ENCODE measurements at regions of chr10 and their contacts with region 1.

Region 1: DNA sequence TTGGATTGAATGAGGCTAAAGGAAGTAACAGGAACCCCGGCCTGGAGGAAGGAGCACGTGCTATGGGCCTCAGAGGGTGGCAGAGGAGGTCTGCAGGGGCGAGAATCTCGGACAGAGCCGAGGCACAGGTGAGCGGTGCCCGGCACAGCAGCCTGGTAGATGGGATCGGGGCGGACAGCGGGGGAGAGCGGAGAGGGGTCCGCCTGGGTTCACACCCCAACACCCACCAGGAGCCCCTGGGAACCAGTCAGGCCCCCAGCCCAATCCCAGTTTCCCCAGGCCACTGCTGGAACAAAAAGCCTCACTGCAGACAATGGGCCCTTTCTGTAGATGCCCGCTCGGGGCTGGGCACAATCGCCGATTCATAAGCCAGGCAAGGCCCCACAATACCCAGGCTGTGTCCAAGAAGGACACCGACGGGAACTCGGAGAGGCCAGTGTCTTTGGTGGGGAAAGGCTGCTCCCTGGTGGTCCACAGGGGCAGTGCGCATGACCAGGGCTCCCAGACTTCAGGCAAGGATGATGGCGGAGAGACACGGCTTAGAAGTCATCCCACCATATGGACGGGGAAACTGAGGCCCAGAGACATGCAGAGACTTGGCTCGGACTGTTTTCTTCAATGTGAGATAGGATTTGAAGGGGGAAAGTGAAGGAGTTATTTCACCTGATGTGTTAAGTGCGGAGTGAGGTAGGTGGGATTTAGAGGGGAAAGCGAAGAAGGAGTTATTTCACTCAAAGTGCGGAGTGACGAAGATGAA is 106.9 kb upstream of the GPR26 start:
- DNase-seq: peak; percentile 65 to 86 (median 82)
- ATAC-seq: peak; percentile 72 to 85
- H3K4me3 ChIP-seq: no peak overlapping the region
- H3K27ac ChIP-seq: no peak overlapping the region
- H3K4me1 ChIP-seq: no peaks in the 10 kb centered on the region
- H3K27me3 ChIP-seq: no peaks in the 10 kb centered on the region

Region 2: GRCh38 chr10:123043409-123043925 is 515.8 kb before region 1 on chr10:
- intact Hi-C with region 1: loop called in 3 of 4 experiments (anchors 2 to 5 kb)
- DNase-seq: no peak
- ATAC-seq: peak in 1 of 2 donors; percentile 47
- H3K4me3 ChIP-seq: no peak overlapping the region
- H3K27ac ChIP-seq: no peak overlapping the region
- H3K4me1 ChIP-seq: no peaks in the 10 kb centered on the region
- H3K27me3 ChIP-seq: no peaks in the 10 kb centered on the region

Region 3: DNA sequence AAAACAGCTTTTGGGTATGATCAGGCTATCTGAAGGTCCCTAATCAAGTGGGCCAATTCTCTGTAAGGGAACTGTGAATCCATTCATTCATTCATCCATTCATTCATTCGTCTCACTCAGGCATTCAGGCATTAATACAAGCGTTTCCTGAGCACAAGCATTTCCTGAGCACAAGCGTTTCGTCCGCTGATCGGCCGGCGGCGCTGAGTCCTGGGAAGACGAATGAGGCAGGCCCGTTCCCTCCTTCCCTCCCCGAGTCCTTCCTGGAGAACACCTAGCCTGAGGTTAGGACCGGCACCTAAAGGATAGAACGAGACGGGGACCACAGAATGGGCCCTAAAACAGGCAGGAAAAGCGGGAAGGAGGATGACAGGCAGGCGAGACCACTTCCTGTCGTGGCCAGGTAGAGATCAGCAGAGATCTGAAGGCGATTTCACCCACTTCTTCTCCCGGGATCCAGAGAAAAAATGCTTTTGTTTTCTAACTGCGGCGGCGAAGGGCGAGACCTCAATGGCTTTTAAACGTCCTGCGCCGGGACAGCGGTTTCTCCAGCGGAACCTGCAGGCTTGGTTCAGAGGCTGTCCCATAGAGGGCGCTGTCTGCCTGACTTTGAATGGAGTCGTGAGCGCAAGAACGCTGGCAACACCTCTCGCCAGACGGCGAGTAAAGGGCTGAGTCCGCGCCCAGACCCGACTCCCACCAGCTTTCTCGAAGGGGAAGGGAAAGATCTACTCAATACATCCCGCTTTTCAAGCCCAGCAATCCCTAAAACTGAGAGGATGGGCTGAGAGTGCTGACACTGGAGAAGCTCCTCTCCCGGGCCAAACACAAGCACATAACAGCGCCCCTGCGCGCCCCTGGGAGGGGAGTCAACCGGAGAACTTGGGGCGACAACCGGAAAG is 426.4 kb before region 1 on chr10:
- intact Hi-C with region 1: loop called (anchors 2 to 10 kb)
- DNase-seq: peak; percentile 87 to 93 (median 89)
- ATAC-seq: peak; percentile 80 to 82
- H3K4me3 ChIP-seq: peak overlapping the region; percentile 28
- H3K27ac ChIP-seq: no peak overlapping the region
- H3K4me1 ChIP-seq: peaks cover 6% of the 10 kb centered on the region
- H3K27me3 ChIP-seq: peaks cover 2% of the 10 kb centered on the region

Measured in right cardiac atrium (tissue), 5 donors.